ENCODE measurements at regions of chr10 and their contacts with region 1.

Region 1: DNA sequence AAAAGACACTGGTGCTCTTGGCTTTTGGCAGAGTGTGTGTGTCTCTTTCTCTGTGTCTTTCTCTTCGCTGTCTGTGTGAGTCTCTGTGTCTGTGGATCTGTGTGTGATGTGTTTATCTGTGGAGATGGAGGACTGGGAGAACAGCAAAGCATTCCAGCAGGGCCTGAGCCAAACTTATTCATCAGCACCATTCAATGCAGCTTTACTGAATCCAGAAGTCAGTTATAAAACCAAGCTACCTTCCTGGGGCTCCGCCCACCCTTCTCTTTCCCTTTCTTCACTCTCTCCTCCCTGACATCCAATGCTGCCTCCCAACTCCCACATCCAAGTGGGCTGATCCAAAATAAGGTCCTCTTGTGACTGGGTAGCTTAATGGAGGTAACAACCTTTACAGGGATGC is 3.9 kb downstream of the SGMS1 start:
- DNase-seq: no peak
- ATAC-seq: no peak
- H3K4me3 ChIP-seq: no peak overlapping the region
- H3K4me3 Mint-ChIP-seq: peak overlapping the region; percentile 74
- H3K27ac ChIP-seq: no peak overlapping the region
- H3K27ac Mint-ChIP-seq: peak overlapping the region; percentile 97
- H3K4me1 ChIP-seq: peaks cover 44% of the 10 kb centered on the region
- H3K4me1 Mint-ChIP-seq: peaks cover 65% of the 10 kb centered on the region
- H3K27me3 ChIP-seq: no peaks in the 10 kb centered on the region
- H3K27me3 Mint-ChIP-seq: no peaks in the 10 kb centered on the region
- CTCF ChIP-seq: no peak

Region 2: GRCh38 chr10:50605269-50606263 is 14.3 kb before region 1 on chr10:
- CTCF ChIA-PET with region 1: no interaction called
- POLR2A ChIA-PET with region 1: interaction called, 14 read pairs
- intact Hi-C with region 1: loop called in 1 of 2 experiments (anchors 1 kb)
- DNase-seq: peak in 2 of 14 experiments; percentile 17 to 26
- ATAC-seq: no peak
- H3K4me3 ChIP-seq: no peak overlapping the region
- H3K4me3 Mint-ChIP-seq: peak overlapping the region; percentile 17
- H3K27ac ChIP-seq: no peak overlapping the region
- H3K27ac Mint-ChIP-seq: peak overlapping the region; percentile 75
- H3K4me1 ChIP-seq: peaks cover 25% of the 10 kb centered on the region
- H3K4me1 Mint-ChIP-seq: peaks cover 85% of the 10 kb centered on the region
- H3K27me3 ChIP-seq: no peaks in the 10 kb centered on the region
- H3K27me3 Mint-ChIP-seq: no peaks in the 10 kb centered on the region
- CTCF ChIP-seq: no peak